Activated CD4-positive, alpha-beta T cell treated with anti-CD3 and anti-CD28 coated beads for 36 hours (primary cell): ENCODE measurements at regions of chr13 and their contacts with region 1.

Region 1: GRCh38 chr13:28532388-28533124 is 37.6 kb upstream of the FLT1 start:
- DNase-seq: peak; percentile 46
- ATAC-seq: peak; percentile 45
- H3K4me3 Mint-ChIP-seq: peak overlapping the region; percentile 57
- H3K27ac Mint-ChIP-seq: no peak overlapping the region
- H3K4me1 Mint-ChIP-seq: no peaks in the 10 kb centered on the region
- H3K27me3 Mint-ChIP-seq: peaks cover 46% of the 10 kb centered on the region

Region 2: DNA sequence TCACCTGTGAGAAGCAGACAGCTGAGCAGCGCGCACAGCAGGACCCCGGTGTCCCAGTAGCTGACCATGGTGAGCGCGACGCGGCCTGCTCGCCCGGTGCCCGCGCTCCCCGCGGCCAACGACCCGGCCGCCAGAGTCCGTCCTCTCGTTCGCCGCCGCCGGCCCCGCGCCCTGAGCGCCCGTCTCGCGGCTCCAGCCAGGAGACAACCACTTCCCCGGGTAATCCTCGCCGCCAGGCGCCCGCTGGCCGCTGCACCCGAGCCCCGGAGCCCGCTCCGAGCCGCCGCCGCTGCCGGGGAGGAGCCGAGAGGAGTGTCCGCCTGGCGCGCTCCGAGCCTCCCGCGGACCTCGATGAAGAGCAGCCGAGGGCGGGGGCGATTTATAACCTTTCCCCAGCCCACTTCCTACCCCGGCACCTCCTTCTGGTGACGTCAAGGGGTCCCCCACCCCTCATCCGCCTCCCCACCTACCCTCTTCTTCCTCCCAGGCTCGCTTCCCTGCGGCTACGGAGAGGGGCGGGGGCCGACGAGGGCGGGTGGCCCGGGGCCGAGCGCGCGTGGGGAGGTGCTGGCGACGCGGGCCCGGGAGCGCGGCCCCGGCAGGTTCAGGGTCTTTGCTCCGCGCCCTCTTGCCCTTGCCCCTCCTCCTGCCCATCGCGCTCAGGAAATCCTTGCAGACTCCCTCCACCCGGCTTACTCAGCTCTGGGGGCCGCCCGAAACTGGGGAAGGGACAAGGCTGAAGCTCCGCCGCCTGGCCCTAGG is 37.6 kb before region 1 on chr13 and contains the start of gene FLT1:
- CTCF ChIA-PET with region 1: interaction called, 5 read pairs
- POLR2A ChIA-PET with region 1: no interaction called
- intact Hi-C with region 1: loop called in 1 of 2 experiments (anchors 2 kb)
- DNase-seq: peak; percentile 69
- ATAC-seq: peak; percentile 55
- H3K4me3 Mint-ChIP-seq: peak within 1 kb of the TSS; percentile 76
- H3K27ac Mint-ChIP-seq: peak within 1 kb of the TSS; percentile 22
- H3K4me1 Mint-ChIP-seq: peaks cover 23% of the 10 kb centered on the region
- H3K27me3 Mint-ChIP-seq: peaks cover 35% of the 10 kb centered on the region
- total RNA-seq, gene FLT1: 21.7 to 27.4 TPM